Mammary epithelial cell (primary cell): ENCODE measurements at regions of chr7 and their contacts with region 1.

Region 1: GRCh38 chr7:45917658-45918057 is 3.4 kb downstream of the IGFBP3 start:
- DNase-seq: peak; percentile 35
- H3K4me3 ChIP-seq: no peak overlapping the region
- H3K27ac ChIP-seq: no peak overlapping the region
- H3K4me1 ChIP-seq: peaks cover 19% of the 10 kb centered on the region
- H3K27me3 ChIP-seq: peaks cover 6% of the 10 kb centered on the region
- CTCF ChIP-seq: peak; percentile 90 to 95

Region 2: DNA sequence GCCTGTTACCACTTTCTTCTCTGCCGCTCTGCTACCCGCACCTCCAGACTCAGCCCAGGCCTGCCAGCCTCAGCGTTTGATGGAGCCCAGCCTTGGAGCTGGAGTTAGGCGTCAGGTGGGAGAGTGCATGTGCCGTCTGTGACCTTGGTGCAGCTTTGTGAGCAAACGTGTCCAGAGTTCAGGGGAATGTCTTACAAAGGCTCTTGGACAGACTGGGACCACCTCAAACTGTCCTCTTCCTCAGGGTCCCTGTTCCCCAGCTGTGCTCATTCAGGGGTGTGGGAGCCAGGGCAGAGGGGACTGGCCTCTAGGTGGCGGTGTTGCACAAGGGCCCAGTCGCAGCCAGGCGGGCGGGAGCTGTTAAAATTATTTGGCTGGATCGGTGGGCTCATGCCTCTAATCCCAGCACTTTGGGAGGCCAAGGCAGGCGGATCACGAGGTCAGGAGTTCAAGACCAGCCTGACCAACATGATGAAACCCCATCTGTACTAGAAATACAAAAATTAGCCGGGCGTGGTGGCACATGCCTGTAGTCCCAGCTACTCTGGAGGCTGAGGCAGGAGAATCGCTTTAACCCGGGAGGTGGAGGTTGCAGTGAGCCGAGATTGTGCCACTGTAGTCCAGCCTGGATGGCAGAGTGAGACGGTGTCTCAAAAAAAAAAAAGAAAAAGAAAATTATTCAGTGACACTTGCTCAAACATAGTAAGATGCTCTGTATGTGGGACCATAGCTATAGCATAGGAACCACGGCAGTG is 254.3 kb before region 1 on chr7:
- CTCF ChIA-PET with region 1: no interaction called
- dilution Hi-C with region 1: no loop called
- in situ Hi-C with region 1: no loop called
- intact Hi-C with region 1: loop called (anchors 2 kb)
- DNase-seq: no peak
- H3K4me3 ChIP-seq: no peak overlapping the region
- H3K27ac ChIP-seq: no peak overlapping the region
- H3K4me1 ChIP-seq: no peaks in the 10 kb centered on the region
- H3K27me3 ChIP-seq: no peaks in the 10 kb centered on the region
- CTCF ChIP-seq: peak; percentile 50 to 75

Region 3: GRCh38 chr7:46357290-46357689 is 439.6 kb after region 1 on chr7:
- CTCF ChIA-PET with region 1: no interaction called
- dilution Hi-C with region 1: loop called (anchors 5 kb)
- in situ Hi-C with region 1: loop called (anchors 5 kb)
- intact Hi-C with region 1: loop called (anchors 1 kb)
- DNase-seq: no peak
- H3K4me3 ChIP-seq: no peak overlapping the region
- H3K27ac ChIP-seq: no peak overlapping the region
- H3K4me1 ChIP-seq: no peaks in the 10 kb centered on the region
- H3K27me3 ChIP-seq: no peaks in the 10 kb centered on the region
- CTCF ChIP-seq: no peak

Region 4: GRCh38 chr7:47100817-47101435 is 1183.3 kb after region 1 on chr7:
- CTCF ChIA-PET with region 1: no interaction called
- dilution Hi-C with region 1: no loop called
- in situ Hi-C with region 1: loop called (anchors 25 kb)
- intact Hi-C with region 1: loop called (anchors 5 kb)
- DNase-seq: peak; percentile 35
- H3K4me3 ChIP-seq: peak overlapping the region in 1 of 3 experiments; percentile 7
- H3K27ac ChIP-seq: no peak overlapping the region
- H3K4me1 ChIP-seq: no peaks in the 10 kb centered on the region
- H3K27me3 ChIP-seq: no peaks in the 10 kb centered on the region
- CTCF ChIP-seq: peak; percentile 71 to 87

Region 5: GRCh38 chr7:47179812-47180515 is 1262.3 kb after region 1 on chr7:
- CTCF ChIA-PET with region 1: no interaction called
- dilution Hi-C with region 1: no loop called
- in situ Hi-C with region 1: loop called (anchors 10 kb)
- intact Hi-C with region 1: loop called (anchors 1 kb)
- DNase-seq: peak; percentile 29
- H3K4me3 ChIP-seq: no peak overlapping the region
- H3K27ac ChIP-seq: no peak overlapping the region
- H3K4me1 ChIP-seq: no peaks in the 10 kb centered on the region
- H3K27me3 ChIP-seq: no peaks in the 10 kb centered on the region
- CTCF ChIP-seq: peak; percentile 85